ENCODE measurements at regions of chrX and their contacts with region 1.

Region 1: GRCh38 chrX:70454441-70455365 is 10.1 kb downstream of the DLG3 start:
- DNase-seq: peak; percentile 84 to 92 (median 90)
- ATAC-seq: peak; percentile 94
- H3K4me3 ChIP-seq: peak overlapping the region; percentile 50
- H3K27ac ChIP-seq: peak overlapping the region; percentile 62
- H3K4me1 ChIP-seq: peaks cover 0 to 23% of the 10 kb centered on the region in 2 experiments; a peak in 4 of 5 replicates
- H3K27me3 ChIP-seq: peaks cover 0 to 9% of the 10 kb centered on the region in 2 experiments; a peak in 1 of 5 replicates
- CTCF ChIP-seq: peak; percentile 73 to 91 (median 82)
- EP300 ChIP-seq: no peak
- POLR2A ChIP-seq: peak; percentile 41; the same call in 1 of the 2 replicates
- RAD21 ChIP-seq: peak; percentile 55 to 77

Region 2: DNA sequence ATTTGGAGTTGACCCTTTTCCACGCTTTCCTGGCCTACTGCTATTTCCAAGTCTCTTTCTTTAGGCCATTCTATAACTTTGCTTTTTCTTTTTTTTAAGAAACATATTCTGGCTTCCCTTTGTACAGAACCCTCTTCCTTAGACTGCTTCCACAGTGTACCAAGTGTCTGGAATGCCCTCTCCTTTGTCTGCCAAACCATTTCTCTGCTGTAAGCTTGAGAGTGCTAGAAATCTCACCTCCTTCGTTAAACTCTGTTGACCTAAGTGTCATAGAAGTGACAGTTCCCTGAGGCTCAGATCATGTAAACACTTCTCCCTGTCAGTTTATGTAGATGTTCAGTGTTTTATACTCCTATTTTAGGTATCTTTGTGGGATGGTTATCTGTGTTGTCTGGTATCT is 730.4 kb before region 1 on chrX:
- CTCF ChIA-PET with region 1: no interaction called
- POLR2A ChIA-PET with region 1: no interaction called
- in situ Hi-C with region 1: no loop called
- intact Hi-C with region 1: no loop called
- DNase-seq: no peak
- ATAC-seq: no peak
- H3K4me3 ChIP-seq: no peak overlapping the region
- H3K27ac ChIP-seq: no peak overlapping the region
- H3K4me1 ChIP-seq: no peaks in the 10 kb centered on the region
- H3K27me3 ChIP-seq: no peaks in the 10 kb centered on the region
- CTCF ChIP-seq: no peak
- EP300 ChIP-seq: no peak
- POLR2A ChIP-seq: no peak
- RAD21 ChIP-seq: no peak

Region 3: DNA sequence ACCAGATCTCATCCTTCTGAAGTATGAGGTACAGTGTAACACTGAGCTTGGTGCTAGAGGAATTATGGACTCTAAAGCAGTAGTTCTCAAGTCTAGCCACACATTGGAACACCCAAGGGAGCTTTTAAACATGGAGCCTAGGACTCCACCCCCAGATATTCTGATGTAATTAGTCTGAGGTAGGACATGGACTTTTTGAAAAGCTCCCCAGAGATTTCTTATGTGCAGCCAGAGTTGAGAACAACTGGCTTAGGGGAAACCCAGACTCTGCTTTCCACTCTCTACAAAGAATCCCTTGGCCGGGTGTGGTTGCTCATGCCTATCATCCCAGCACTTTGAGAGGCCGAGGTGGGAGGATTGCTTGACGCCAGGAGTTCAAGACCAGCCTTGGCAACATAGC is 43.2 kb before region 1 on chrX:
- CTCF ChIA-PET with region 1: no interaction called
- POLR2A ChIA-PET with region 1: no interaction called
- in situ Hi-C with region 1: no loop called
- intact Hi-C with region 1: no loop called
- DNase-seq: no peak
- ATAC-seq: no peak
- H3K4me3 ChIP-seq: no peak overlapping the region
- H3K27ac ChIP-seq: no peak overlapping the region
- H3K4me1 ChIP-seq: no peaks in the 10 kb centered on the region
- H3K27me3 ChIP-seq: no peaks in the 10 kb centered on the region
- CTCF ChIP-seq: no peak
- EP300 ChIP-seq: no peak
- POLR2A ChIP-seq: no peak
- RAD21 ChIP-seq: no peak

Region 4: GRCh38 chrX:70554081-70554480 is 99.4 kb after region 1 on chrX:
- CTCF ChIA-PET with region 1: no interaction called
- POLR2A ChIA-PET with region 1: no interaction called
- in situ Hi-C with region 1: no loop called
- intact Hi-C with region 1: loop called (anchors 1 kb)
- DNase-seq: peak in 2 of 4 experiments; percentile 1 to 3
- ATAC-seq: peak; percentile 71
- H3K4me3 ChIP-seq: no peak overlapping the region
- H3K27ac ChIP-seq: no peak overlapping the region
- H3K4me1 ChIP-seq: no peaks in the 10 kb centered on the region
- H3K27me3 ChIP-seq: no peaks in the 10 kb centered on the region
- CTCF ChIP-seq: peak in 1 of 3 experiments; percentile 38; a peak in 1 of 6 replicates
- EP300 ChIP-seq: no peak; the same call in 1 of the 2 replicates
- POLR2A ChIP-seq: no peak
- RAD21 ChIP-seq: peak; percentile 34 to 55

Region 5: GRCh38 chrX:70664726-70665125 is 210.0 kb after region 1 on chrX:
- CTCF ChIA-PET with region 1: no interaction called
- POLR2A ChIA-PET with region 1: interaction called, 3 read pairs
- in situ Hi-C with region 1: loop called (anchors 10 kb)
- intact Hi-C with region 1: loop called (anchors 2 kb)
- DNase-seq: peak in 2 of 4 experiments; percentile 8 to 23
- ATAC-seq: peak; percentile 56; the same call in 1 of the 3 replicates
- H3K4me3 ChIP-seq: no peak overlapping the region
- H3K27ac ChIP-seq: no peak overlapping the region
- H3K4me1 ChIP-seq: no peaks in the 10 kb centered on the region
- H3K27me3 ChIP-seq: no peaks in the 10 kb centered on the region
- CTCF ChIP-seq: peak in 2 of 3 experiments; percentile 27 to 56; a peak in 3 of 6 replicates
- EP300 ChIP-seq: no peak
- POLR2A ChIP-seq: no peak
- RAD21 ChIP-seq: peak in 1 of 2 experiments; percentile 55; a peak in 2 of 4 replicates

Region 6: DNA sequence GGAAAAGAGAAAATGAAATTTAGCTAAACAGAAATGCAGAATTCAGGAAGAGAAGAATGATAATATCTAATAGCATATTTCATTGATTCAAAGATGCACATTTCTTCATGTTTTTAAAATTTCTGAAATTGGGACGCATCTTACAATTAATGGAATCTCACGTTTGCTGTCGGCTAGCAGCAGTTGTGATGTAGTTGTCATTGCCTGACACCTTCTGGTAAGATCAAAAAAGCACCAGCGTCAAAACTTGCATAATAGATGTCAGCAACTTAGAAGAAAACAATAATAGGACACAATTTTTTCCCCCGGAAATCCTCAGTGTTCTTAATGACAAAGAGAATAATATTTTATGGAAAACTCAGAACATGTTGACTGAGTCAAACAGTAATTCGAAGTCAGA is 506.0 kb after region 1 on chrX:
- CTCF ChIA-PET with region 1: no interaction called
- POLR2A ChIA-PET with region 1: no interaction called
- in situ Hi-C with region 1: no loop called
- intact Hi-C with region 1: loop called (anchors 10 kb)
- DNase-seq: peak in 1 of 4 experiments; percentile 14
- ATAC-seq: 0 out of 3 replicates have a peak, but pooled peaks have one; percentile 47
- H3K4me3 ChIP-seq: no peak overlapping the region
- H3K27ac ChIP-seq: no peak overlapping the region
- H3K4me1 ChIP-seq: no peaks in the 10 kb centered on the region
- H3K27me3 ChIP-seq: no peaks in the 10 kb centered on the region
- CTCF ChIP-seq: peak in 2 of 3 experiments; percentile 38 to 62; a peak in 4 of 6 replicates
- EP300 ChIP-seq: no peak
- POLR2A ChIP-seq: no peak
- RAD21 ChIP-seq: peak in 1 of 2 experiments; percentile 61; a peak in 2 of 4 replicates

Measured in K562 (cell line).